ENCODE measurements at regions of chr22 and their contacts with region 1.

Region 1: GRCh38 chr22:22959147-22959827 is 71.7 kb downstream of the IGLL5 start:
- DNase-seq: peak; percentile 84
- ATAC-seq: peak; percentile 34
- H3K4me3 Mint-ChIP-seq: no peak overlapping the region
- H3K27ac Mint-ChIP-seq: no peak overlapping the region
- H3K4me1 Mint-ChIP-seq: peaks cover 9% of the 10 kb centered on the region
- H3K27me3 Mint-ChIP-seq: peaks cover 52% of the 10 kb centered on the region
- CTCF ChIP-seq: peak; percentile 83

Region 2: DNA sequence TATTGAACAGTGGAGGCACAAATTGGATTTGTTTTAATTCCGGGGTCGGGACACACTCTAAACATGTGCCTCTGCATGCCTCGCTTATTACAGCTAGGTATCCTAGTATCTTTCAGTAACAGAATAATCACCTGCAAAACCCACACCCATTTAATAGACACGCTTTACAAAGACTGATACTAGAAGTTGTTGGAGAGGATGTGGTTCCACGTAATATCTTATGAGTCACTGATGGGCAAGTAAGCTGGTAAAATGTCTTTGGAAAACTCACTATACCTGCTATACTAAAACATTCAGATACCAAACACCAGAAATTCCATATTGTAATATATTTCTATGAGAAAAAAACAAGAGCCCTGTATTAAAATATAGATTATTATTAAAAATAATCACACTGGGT is 230.9 kb before region 1 on chr22:
- CTCF ChIA-PET with region 1: no interaction called
- POLR2A ChIA-PET with region 1: no interaction called
- DNase-seq: no peak
- ATAC-seq: no peak
- H3K4me3 Mint-ChIP-seq: no peak overlapping the region
- H3K27ac Mint-ChIP-seq: no peak overlapping the region
- H3K4me1 Mint-ChIP-seq: no peaks in the 10 kb centered on the region
- H3K27me3 Mint-ChIP-seq: peaks cover 94% of the 10 kb centered on the region
- CTCF ChIP-seq: no peak

Region 3: GRCh38 chr22:22745225-22746060 is 213.8 kb before region 1 on chr22:
- CTCF ChIA-PET with region 1: interaction called, 22 read pairs
- POLR2A ChIA-PET with region 1: no interaction called
- DNase-seq: peak; percentile 74
- ATAC-seq: peak; percentile 86
- H3K4me3 Mint-ChIP-seq: no peak overlapping the region
- H3K27ac Mint-ChIP-seq: no peak overlapping the region
- H3K4me1 Mint-ChIP-seq: peaks cover 19% of the 10 kb centered on the region
- H3K27me3 Mint-ChIP-seq: peaks cover 91% of the 10 kb centered on the region
- CTCF ChIP-seq: peak; percentile 35; the same call in 1 of the 2 replicates

Region 4: GRCh38 chr22:22810018-22810427 is 149.3 kb before region 1 on chr22:
- CTCF ChIA-PET with region 1: interaction called, 50 read pairs
- POLR2A ChIA-PET with region 1: no interaction called
- DNase-seq: peak; percentile 68
- ATAC-seq: peak; percentile 91
- H3K4me3 Mint-ChIP-seq: no peak overlapping the region
- H3K27ac Mint-ChIP-seq: no peak overlapping the region
- H3K4me1 Mint-ChIP-seq: no peaks in the 10 kb centered on the region
- H3K27me3 Mint-ChIP-seq: peaks cover 84% of the 10 kb centered on the region
- CTCF ChIP-seq: peak; percentile 66; the same call in 1 of the 2 replicates

Region 5: DNA sequence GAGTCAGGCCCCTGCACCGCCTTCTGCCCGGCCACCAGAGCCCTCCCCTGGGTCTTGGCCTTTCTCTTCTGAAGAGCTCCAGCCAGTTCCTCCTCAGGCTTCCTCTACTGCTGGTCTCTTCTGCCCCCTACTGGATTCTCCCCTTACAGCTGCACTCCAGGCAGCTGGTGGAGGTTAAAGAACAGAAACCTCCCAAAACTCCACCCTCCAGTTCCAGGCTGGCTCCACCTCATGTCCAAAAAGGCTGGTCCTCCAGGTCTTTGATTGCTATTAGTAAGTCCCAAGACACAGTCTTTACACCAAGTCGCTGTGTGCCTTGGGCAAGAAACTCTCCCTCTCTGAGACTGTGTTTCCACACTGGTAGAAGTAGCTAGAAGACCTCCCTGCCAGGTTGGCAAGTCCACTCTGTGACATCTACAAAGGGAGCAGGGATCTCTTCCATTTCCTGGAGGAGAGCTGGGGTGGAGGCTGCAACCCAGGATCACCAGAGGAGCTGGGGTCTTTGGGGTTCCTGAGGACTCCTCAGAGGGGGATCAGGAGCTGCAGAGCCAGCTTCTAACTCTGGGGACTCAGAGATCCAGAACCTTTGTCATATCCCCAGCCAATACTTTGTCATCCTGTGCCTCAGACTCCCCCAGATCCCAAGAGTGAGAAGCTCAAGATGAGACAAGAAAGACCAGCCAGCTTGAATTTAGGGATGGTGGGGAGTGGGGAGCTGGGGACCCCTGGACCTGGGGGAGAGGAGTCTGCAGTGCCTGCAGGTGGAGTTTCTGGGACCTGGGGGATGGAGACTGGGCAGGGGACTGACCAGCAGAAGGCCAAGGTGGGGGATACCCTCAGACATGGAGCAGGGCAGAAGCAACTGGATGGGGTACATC is 75.0 kb before region 1 on chr22:
- CTCF ChIA-PET with region 1: interaction called, 56 read pairs
- POLR2A ChIA-PET with region 1: no interaction called
- DNase-seq: peak; percentile 83
- ATAC-seq: peak; percentile 96
- H3K4me3 Mint-ChIP-seq: no peak overlapping the region
- H3K27ac Mint-ChIP-seq: no peak overlapping the region
- H3K4me1 Mint-ChIP-seq: no peaks in the 10 kb centered on the region
- H3K27me3 Mint-ChIP-seq: peaks cover 83% of the 10 kb centered on the region
- CTCF ChIP-seq: peak; percentile 58

Region 6: GRCh38 chr22:23012081-23012622 is 52.9 kb after region 1 on chr22:
- CTCF ChIA-PET with region 1: interaction called, 12 read pairs
- POLR2A ChIA-PET with region 1: no interaction called
- DNase-seq: no peak
- ATAC-seq: no peak
- H3K4me3 Mint-ChIP-seq: no peak overlapping the region
- H3K27ac Mint-ChIP-seq: no peak overlapping the region
- H3K4me1 Mint-ChIP-seq: no peaks in the 10 kb centered on the region
- H3K27me3 Mint-ChIP-seq: peaks cover 47% of the 10 kb centered on the region
- CTCF ChIP-seq: no peak

Region 7: GRCh38 chr22:23128269-23129108 is 169.2 kb after region 1 on chr22:
- CTCF ChIA-PET with region 1: interaction called, 258 read pairs
- POLR2A ChIA-PET with region 1: interaction called, 3 read pairs
- DNase-seq: peak; percentile 89
- ATAC-seq: peak; percentile 91
- H3K4me3 Mint-ChIP-seq: no peak overlapping the region
- H3K27ac Mint-ChIP-seq: no peak overlapping the region
- H3K4me1 Mint-ChIP-seq: peaks cover 5% of the 10 kb centered on the region; the same call in 1 of the 2 replicates
- H3K27me3 Mint-ChIP-seq: peaks cover 7% of the 10 kb centered on the region
- CTCF ChIP-seq: peak; percentile 69

Region 8: GRCh38 chr22:23385291-23386244 is 426.3 kb after region 1 on chr22:
- CTCF ChIA-PET with region 1: interaction called, 21 read pairs
- POLR2A ChIA-PET with region 1: no interaction called
- DNase-seq: peak; percentile 93
- ATAC-seq: peak; percentile 80
- H3K4me3 Mint-ChIP-seq: no peak overlapping the region
- H3K27ac Mint-ChIP-seq: no peak overlapping the region
- H3K4me1 Mint-ChIP-seq: peaks cover 12% of the 10 kb centered on the region; the same call in 1 of the 2 replicates
- H3K27me3 Mint-ChIP-seq: peaks cover 3% of the 10 kb centered on the region; the same call in 1 of the 2 replicates
- CTCF ChIP-seq: peak; percentile 100

Measured in WTC11 (cell line).